ENCODE measurements at regions of chr7 and their contacts with region 1.

Region 1: GRCh38 chr7:128017862-128018845 is 13.1 kb downstream of the LRRC4 start:
- DNase-seq: no peak

Region 2: DNA sequence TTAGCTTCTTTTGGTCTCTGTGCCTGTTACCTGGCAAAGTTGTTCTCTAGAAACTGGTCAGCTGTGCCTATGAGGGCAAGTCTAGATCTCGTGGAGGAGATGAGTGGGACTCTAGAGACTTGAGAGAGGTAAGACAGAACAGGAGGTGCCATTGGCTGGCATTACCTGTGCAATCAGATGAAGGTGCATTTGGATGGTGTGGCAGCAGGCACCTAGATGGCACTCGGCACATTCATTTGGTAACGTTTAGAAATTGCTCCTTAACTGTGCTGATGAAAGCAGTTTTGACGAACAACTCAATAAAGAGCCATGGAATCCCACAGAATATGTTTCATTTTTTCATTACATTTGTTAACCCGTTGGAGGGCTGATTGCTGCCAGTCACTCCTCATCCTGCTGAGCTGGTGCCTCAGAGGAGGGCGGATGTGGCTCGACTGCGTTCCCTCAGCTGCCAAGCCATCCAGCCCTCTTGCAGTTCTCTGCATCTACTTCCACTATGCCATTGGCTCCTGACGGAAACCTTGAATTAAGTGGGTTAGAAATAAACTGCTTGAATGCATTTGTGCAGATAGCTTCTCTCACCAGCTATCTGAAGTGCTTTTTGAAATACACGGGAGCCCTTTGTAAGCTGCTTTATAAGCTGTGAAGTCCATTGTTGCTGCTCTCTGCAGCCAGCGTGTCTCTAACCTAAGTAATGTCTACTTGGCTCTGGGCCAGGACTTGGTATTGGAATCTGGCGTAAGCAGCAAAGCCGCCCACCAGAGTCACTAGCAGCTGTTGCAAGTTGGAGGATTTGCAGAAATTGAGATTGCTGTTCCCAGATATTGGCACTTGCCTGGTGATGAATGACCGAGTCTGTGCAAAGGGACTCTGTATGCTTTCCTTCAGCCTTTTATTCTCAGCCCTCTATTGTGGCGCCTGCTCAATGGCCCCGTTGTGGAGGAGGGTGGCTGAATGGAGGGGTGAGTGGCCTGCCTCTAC is 74.3 kb before region 1 on chr7:
- intact Hi-C with region 1: loop called (anchors 5 kb)
- DNase-seq: peak; percentile 48 to 96 (median 72)

Region 3: GRCh38 chr7:128381161-128381821 is 363.1 kb after region 1 on chr7:
- intact Hi-C with region 1: no loop called
- DNase-seq: peak in 3 of 10 donors; percentile 53 to 74 (median 66)